PC-3 (cell line): ENCODE measurements at regions of chr14 and their contacts with region 1.

Region 1: DNA sequence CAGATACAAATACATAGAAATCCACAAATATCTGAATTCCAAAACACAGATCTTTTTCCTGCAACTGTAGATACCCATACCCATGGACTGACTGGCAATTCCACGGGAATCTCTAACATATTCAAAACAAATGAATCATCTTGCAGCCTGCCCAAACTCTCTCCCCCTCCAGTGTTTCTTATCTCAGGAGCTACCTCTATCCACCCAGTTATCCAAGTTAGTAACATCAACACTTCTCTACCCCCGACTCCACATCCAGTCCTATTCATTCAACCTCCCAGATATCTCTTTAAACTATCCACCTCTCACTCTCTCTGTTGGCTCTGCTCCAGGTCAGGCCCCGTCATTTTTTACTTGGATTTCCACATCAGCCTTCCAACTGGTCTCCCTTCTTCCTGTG is 6.7 kb upstream of the KCNH5 start:
- DNase-seq: no peak
- ATAC-seq: no peak
- H3K4me3 ChIP-seq: no peak overlapping the region
- H3K27ac ChIP-seq: no peak overlapping the region
- H3K4me1 ChIP-seq: no peaks in the 10 kb centered on the region
- H3K27me3 ChIP-seq: peaks cover 66% of the 10 kb centered on the region
- CTCF ChIP-seq: no peak

Region 2: DNA sequence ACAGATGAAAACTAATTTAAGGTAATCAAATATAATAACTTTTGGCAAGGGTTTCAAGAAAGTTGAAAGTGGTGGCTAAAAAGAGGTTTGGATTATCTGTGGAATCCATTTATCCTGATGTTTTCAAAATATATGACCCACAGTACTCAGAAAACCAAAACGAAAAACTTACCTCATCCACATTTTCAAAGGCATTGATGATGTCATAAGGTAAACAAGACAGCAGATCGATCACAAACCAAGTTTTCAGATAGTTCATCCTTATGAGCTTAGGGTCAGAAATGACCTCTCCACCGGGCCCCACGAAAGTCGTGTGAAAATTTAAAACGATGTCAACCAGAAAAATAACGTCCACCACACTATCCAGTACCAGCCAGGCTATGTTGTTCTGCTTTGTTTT is 71.3 kb before region 1 on chr14:
- CTCF ChIA-PET with region 1: no interaction called
- POLR2A ChIA-PET with region 1: interaction called, 21 read pairs
- intact Hi-C with region 1: no loop called
- DNase-seq: no peak
- ATAC-seq: no peak
- H3K4me3 ChIP-seq: no peak overlapping the region
- H3K27ac ChIP-seq: no peak overlapping the region
- H3K4me1 ChIP-seq: no peaks in the 10 kb centered on the region
- H3K27me3 ChIP-seq: peaks cover 34% of the 10 kb centered on the region
- CTCF ChIP-seq: no peak

Region 3: GRCh38 chr14:63308723-63309317 is 256.9 kb after region 1 on chr14:
- CTCF ChIA-PET with region 1: no interaction called
- POLR2A ChIA-PET with region 1: no interaction called
- intact Hi-C with region 1: no loop called
- DNase-seq: peak; percentile 55
- ATAC-seq: peak; percentile 93
- H3K4me3 ChIP-seq: no peak overlapping the region
- H3K27ac ChIP-seq: no peak overlapping the region
- H3K4me1 ChIP-seq: no peaks in the 10 kb centered on the region
- H3K27me3 ChIP-seq: peaks cover 59% of the 10 kb centered on the region
- CTCF ChIP-seq: peak; percentile 82